ENCODE measurements at regions of chr1 and their contacts with region 1.

Region 1: GRCh38 chr1:85307987-85308832 is 31.8 kb upstream of the BCL10 start:
- DNase-seq: peak; percentile 88 to 92
- ATAC-seq: peak; percentile 98 to 100 (median 98)
- H3K4me3 ChIP-seq: peak overlapping the region; percentile 45
- H3K27ac ChIP-seq: no peak overlapping the region
- H3K4me1 ChIP-seq: peaks cover 9% of the 10 kb centered on the region
- H3K27me3 ChIP-seq: no peaks in the 10 kb centered on the region
- CTCF ChIP-seq: peak; percentile 95

Region 2: DNA sequence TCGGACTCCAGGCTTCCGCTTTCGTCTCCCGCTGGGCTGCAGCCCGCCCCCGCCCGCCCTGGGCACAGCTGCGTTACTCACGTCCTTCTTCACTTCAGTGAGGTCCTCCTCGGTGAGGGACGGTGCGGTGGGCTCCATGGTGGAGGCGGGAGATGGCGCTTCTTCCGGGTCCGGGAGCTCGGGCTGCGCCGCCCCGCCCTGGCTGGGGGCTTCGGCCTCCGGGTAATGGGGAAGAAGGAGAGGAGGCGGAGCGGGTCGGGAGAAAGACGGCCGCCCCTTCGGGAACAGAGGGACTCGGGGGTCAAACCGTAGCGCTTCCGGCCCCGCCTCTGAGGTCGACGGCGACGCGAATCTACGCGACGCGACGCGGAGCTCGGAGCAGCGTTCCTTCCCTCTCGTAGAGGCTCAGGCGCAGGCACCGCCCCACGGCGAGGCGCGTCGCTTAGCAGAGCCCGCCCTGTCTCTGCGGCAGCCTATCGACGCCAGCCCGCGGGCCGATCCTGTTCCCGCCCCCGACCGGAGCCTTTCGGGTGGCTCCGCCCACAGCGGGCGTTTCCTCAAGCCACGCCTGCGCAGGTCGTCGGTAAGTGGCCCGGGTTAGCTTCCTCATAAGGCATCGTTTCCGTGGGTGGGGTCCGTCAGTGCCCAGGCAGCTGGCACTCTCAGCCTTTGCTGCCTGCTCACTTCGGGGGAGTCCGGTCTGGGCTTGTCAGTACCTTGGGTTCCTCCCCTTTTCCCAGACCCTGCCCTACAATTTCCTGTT is 31.8 kb before region 1 on chr1 and contains the start of gene BCL10:
- intact Hi-C with region 1: no loop called
- DNase-seq: peak; percentile 99
- ATAC-seq: peak; percentile 96 to 98 (median 98)
- H3K4me3 ChIP-seq: peak within 1 kb of the TSS; percentile 87
- H3K27ac ChIP-seq: peak within 1 kb of the TSS; percentile 97
- H3K4me1 ChIP-seq: peaks cover 14% of the 10 kb centered on the region
- H3K27me3 ChIP-seq: no peaks in the 10 kb centered on the region
- CTCF ChIP-seq: no peak
- total RNA-seq, gene BCL10: 4.2 to 10.9 (median 8.7) TPM

Region 3: DNA sequence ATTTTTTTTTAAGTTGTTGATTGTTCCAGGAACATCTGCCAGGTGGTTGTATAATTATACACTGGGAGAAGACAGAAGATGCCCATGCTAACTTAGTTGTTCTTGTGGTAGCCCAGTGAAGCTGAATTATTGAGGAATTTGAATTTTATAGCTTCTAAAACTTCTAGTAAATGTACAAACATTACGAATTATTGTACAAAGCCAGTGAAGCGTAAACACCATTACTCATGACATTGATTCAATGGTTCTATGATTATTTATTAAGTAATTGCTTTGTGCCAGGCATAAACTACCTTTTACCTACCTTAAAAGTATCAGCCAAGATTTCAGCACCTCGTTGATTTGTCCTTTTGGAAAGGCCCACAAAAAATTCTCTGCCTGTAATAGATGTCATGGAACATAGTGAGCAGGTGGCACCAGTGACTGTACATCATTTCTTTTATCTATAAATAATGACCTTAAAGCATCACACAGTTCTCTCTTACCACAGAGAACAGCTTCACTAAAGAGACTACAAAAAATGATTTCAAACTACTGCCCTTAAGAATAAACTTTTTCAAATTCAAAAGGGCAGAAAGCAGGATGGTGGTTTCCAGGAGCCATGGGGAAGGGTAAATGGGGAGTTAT is 43.1 kb after region 1 on chr1:
- intact Hi-C with region 1: no loop called
- DNase-seq: no peak
- ATAC-seq: peak in 2 of 4 donors; percentile 64 to 69
- H3K4me3 ChIP-seq: no peak overlapping the region
- H3K27ac ChIP-seq: no peak overlapping the region
- H3K4me1 ChIP-seq: no peaks in the 10 kb centered on the region
- H3K27me3 ChIP-seq: no peaks in the 10 kb centered on the region
- CTCF ChIP-seq: no peak

Region 4: GRCh38 chr1:85464497-85465098 is 156.4 kb after region 1 on chr1:
- intact Hi-C with region 1: loop called (anchors 5 to 10 kb)
- DNase-seq: peak; percentile 76 to 78
- ATAC-seq: peak; percentile 72 to 86 (median 78)
- H3K4me3 ChIP-seq: peak overlapping the region; percentile 85
- H3K27ac ChIP-seq: peak overlapping the region; percentile 70
- H3K4me1 ChIP-seq: peaks cover 6% of the 10 kb centered on the region
- H3K27me3 ChIP-seq: no peaks in the 10 kb centered on the region
- CTCF ChIP-seq: no peak

Region 5: DNA sequence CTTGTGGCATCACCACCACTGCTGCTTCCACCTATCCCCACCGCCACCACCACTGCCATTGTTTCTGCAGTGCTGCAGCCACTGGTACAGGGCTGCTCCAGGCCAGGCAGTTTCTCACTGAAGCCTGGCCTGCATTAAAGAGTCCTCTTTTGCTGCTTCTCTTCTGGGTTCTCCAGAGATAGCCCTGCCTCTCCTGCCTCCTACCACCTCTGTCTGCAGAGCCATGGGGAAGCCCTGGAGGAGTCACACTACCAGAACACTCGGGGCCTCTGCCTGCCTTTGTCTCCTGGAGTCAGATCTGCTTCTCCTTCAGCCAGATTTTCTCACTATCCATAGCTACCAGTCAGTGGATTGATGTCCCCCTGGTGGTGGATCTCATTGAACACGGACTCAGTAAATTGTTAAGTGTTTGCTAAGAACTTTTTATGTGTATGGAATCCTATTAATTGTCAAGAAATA is 194.4 kb after region 1 on chr1:
- intact Hi-C with region 1: loop called (anchors 1 to 10 kb)
- DNase-seq: peak in 1 of 2 donors; percentile 13
- ATAC-seq: peak; percentile 60 to 88 (median 78)
- H3K4me3 ChIP-seq: no peak overlapping the region
- H3K27ac ChIP-seq: no peak overlapping the region
- H3K4me1 ChIP-seq: no peaks in the 10 kb centered on the region
- H3K27me3 ChIP-seq: no peaks in the 10 kb centered on the region
- CTCF ChIP-seq: peak; percentile 53

Region 6: GRCh38 chr1:85692730-85693314 is 384.6 kb after region 1 on chr1:
- intact Hi-C with region 1: loop called (anchors 1 to 5 kb)
- DNase-seq: no peak
- ATAC-seq: peak in 1 of 4 donors; percentile 58
- H3K4me3 ChIP-seq: no peak overlapping the region
- H3K27ac ChIP-seq: no peak overlapping the region
- H3K4me1 ChIP-seq: peaks cover 9% of the 10 kb centered on the region
- H3K27me3 ChIP-seq: no peaks in the 10 kb centered on the region
- CTCF ChIP-seq: peak; percentile 57

Region 7: DNA sequence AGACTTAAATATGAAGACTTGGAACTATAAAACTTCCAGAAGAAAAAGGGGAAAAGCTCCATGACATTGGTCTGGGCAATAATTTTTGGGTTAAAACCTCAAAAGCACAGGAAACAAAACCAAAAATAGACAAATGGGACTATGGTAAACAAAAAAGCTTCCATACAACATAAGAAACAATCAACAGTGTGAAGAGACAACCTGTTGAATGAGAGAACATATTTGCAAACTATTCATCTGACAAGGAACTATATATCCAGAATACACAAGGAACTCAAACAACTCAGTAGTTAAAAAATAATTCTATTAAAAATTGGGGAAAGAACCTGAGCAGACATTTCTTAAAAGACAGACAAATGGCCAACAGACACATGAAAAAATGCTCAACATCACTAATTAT is 592.7 kb after region 1 on chr1:
- intact Hi-C with region 1: no loop called
- DNase-seq: no peak
- ATAC-seq: no peak
- H3K4me3 ChIP-seq: no peak overlapping the region
- H3K27ac ChIP-seq: no peak overlapping the region
- H3K4me1 ChIP-seq: no peaks in the 10 kb centered on the region
- H3K27me3 ChIP-seq: no peaks in the 10 kb centered on the region
- CTCF ChIP-seq: no peak

Measured in psoas muscle (tissue), 8 donors.